Panc1 (cell line): ENCODE measurements at regions of chr9 and their contacts with region 1.

Region 1: GRCh38 chr9:33159760-33160127 is 7.4 kb downstream of the B4GALT1 start:
- DNase-seq: no peak
- ATAC-seq: 0 out of 2 replicates have a peak, but pooled peaks have one; percentile 1
- H3K4me3 ChIP-seq: peak overlapping the region in 1 of 2 experiments; percentile 4; a peak in 1 of 4 replicates
- H3K27ac ChIP-seq: peak overlapping the region; percentile 52
- H3K4me1 ChIP-seq: peaks cover 88% of the 10 kb centered on the region
- H3K27me3 ChIP-seq: no peaks in the 10 kb centered on the region
- CTCF ChIP-seq: no peak

Region 2: DNA sequence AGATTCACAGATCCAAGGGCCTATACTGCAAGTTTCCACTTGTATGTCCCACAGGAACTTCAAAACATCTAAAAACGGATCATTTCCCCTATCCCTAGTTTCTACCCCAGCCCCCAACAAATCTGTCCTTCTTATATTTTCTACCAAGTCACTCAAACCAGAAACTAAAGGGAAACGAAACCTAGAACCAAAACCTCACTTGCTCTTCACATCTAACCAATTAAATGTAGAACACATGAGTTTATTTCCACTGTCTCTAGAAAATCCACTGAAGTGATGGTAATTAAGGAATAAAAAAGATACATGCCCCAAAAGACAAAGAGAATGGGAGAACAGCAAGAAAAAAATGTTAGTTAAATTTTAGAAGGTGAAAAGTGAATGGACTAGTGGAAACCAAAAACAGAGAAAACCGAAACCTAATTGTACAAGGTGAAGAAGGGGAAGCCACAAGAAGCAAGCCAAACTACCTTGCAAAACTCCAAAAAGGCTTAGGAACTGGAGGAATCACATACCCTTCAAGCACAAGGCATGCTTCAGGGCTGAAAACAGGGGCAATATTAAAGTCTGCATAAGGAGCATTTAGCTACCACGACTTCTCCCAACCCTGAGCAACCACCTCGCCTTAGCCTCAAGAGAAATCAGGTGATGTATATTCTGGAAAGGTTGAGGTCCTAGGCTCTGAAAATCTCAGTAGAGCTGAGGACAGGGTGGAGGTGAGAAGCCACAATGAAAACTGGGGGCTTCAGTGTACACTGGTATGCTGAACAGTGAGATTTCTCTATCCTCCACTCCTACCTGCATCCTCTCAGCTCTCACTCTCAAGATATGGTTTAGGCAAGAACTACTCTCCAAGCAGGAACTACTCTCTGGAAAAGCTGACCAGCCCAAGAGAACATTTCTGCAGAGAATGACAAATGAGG is 94.3 kb before region 1 on chr9:
- CTCF ChIA-PET with region 1: interaction called, 11 read pairs
- POLR2A ChIA-PET with region 1: no interaction called
- in situ Hi-C with region 1: no loop called
- intact Hi-C with region 1: no loop called
- DNase-seq: no peak
- ATAC-seq: no peak
- H3K4me3 ChIP-seq: no peak overlapping the region
- H3K27ac ChIP-seq: no peak overlapping the region
- H3K4me1 ChIP-seq: no peaks in the 10 kb centered on the region
- H3K27me3 ChIP-seq: no peaks in the 10 kb centered on the region
- CTCF ChIP-seq: no peak

Region 3: GRCh38 chr9:33198165-33198564 is 38.4 kb after region 1 on chr9:
- CTCF ChIA-PET with region 1: no interaction called
- POLR2A ChIA-PET with region 1: interaction called, 15 read pairs
- in situ Hi-C with region 1: no loop called
- intact Hi-C with region 1: no loop called
- DNase-seq: no peak
- ATAC-seq: no peak
- H3K4me3 ChIP-seq: no peak overlapping the region
- H3K27ac ChIP-seq: no peak overlapping the region
- H3K4me1 ChIP-seq: no peaks in the 10 kb centered on the region
- H3K27me3 ChIP-seq: peaks cover 2% of the 10 kb centered on the region; the same call in 1 of the 2 replicates
- CTCF ChIP-seq: no peak